Sciatic nerve (tissue), 2 donors: ENCODE measurements at regions of chr19 and their contacts with region 1.

Region 1: DNA sequence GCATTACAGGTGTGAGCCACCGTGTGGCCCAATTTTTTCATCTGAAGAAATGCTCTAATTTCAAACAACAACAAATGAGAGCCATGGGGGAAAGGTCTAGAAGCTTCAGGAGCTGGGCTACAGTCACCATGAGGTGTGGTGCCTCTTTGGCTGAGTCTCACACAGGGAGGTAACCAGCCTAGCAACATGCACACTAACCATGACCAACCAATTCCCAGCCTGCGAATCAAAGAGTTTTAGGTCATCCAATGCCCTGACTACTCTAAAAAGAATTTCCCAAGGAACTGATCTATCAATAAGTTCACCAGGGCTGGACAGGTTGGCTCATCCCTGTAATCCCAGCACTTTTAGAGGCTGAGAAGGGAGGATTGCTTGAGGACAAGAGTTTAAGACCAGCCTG is 29.9 kb downstream of the PBX4 start:
- DNase-seq: no peak
- ATAC-seq: no peak

Region 2: DNA sequence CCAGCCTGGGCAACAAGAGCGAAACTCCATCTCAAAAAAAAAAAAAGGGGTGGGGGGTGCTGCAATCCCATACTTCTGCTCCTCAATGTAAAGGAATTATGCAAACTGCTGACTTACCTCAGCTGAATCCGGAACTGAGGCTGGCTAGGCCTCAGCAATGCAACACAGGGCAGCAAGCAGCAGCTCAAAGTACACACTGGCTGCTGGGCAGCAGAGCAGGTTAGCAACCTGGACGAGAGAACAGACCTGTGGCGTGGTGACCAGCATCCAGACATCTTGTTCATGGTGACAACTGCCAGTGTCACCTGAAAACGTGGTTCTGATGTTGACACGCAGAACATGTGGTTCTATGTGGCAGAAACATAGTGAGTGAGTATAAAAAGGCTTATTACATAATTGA is 116.3 kb after region 1 on chr19:
- intact Hi-C with region 1: loop called (anchors 5 kb)
- DNase-seq: no peak
- ATAC-seq: no peak